Ovary (tissue), 10 donors: ENCODE measurements at regions of chrX and their contacts with region 1.

Region 1: GRCh38 chrX:154534862-154535670 is 11.6 kb downstream of the G6PD start:
- DNase-seq: peak; percentile 87 to 93 (median 92)
- H3K4me3 ChIP-seq: no peak overlapping the region
- H3K27ac ChIP-seq: no peak overlapping the region
- H3K4me1 ChIP-seq: peaks cover 3% of the 10 kb centered on the region
- H3K27me3 ChIP-seq: no peaks in the 10 kb centered on the region
- CTCF ChIP-seq: peak; percentile 98 to 99 (median 99)
- EP300 ChIP-seq: no peak
- POLR2A ChIP-seq: peak; percentile 20

Region 2: GRCh38 chrX:154401045-154401799 is 133.8 kb before region 1 on chrX:
- intact Hi-C with region 1: loop called in 1 of 4 experiments (anchors 5 kb)
- DNase-seq: peak in 1 of 5 donors; percentile 7
- H3K4me3 ChIP-seq: no peak overlapping the region
- H3K27ac ChIP-seq: no peak overlapping the region
- H3K4me1 ChIP-seq: no peaks in the 10 kb centered on the region
- H3K27me3 ChIP-seq: no peaks in the 10 kb centered on the region
- CTCF ChIP-seq: no peak
- EP300 ChIP-seq: no peak
- POLR2A ChIP-seq: no peak